AG04449 (cell line): ENCODE measurements at regions of chr6 and their contacts with region 1.

Region 1: GRCh38 chr6:11700118-11700718 is 78.4 kb downstream of the ADTRP start:
- DNase-seq: no peak
- H3K4me3 ChIP-seq: no peak overlapping the region
- CTCF ChIP-seq: peak; percentile 21

Region 2: DNA sequence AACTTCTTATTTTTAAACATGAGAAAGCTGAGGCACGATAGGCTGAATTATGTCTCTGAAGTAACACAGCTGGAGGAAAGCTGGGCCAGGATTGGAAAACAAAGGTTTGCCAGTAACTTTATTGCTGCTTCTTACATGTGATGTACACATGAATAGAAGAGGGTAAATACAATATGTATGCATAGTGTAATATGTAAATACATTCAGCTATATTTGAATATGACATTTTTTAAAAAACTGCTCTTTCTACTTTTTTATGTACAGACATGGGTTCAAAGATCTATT is 11.9 kb before region 1 on chr6:
- CTCF ChIA-PET with region 1: interaction called, 17 read pairs
- POLR2A ChIA-PET with region 1: no interaction called
- DNase-seq: no peak
- H3K4me3 ChIP-seq: no peak overlapping the region
- CTCF ChIP-seq: no peak

Region 3: GRCh38 chr6:11711003-11711983 is 11.1 kb after region 1 on chr6:
- CTCF ChIA-PET with region 1: interaction called, 16 read pairs
- POLR2A ChIA-PET with region 1: no interaction called
- DNase-seq: no peak
- H3K4me3 ChIP-seq: no peak overlapping the region
- CTCF ChIP-seq: no peak